Gastrocnemius medialis (tissue), 4 donors: ENCODE measurements at regions of chrX and their contacts with region 1.

Region 1: DNA sequence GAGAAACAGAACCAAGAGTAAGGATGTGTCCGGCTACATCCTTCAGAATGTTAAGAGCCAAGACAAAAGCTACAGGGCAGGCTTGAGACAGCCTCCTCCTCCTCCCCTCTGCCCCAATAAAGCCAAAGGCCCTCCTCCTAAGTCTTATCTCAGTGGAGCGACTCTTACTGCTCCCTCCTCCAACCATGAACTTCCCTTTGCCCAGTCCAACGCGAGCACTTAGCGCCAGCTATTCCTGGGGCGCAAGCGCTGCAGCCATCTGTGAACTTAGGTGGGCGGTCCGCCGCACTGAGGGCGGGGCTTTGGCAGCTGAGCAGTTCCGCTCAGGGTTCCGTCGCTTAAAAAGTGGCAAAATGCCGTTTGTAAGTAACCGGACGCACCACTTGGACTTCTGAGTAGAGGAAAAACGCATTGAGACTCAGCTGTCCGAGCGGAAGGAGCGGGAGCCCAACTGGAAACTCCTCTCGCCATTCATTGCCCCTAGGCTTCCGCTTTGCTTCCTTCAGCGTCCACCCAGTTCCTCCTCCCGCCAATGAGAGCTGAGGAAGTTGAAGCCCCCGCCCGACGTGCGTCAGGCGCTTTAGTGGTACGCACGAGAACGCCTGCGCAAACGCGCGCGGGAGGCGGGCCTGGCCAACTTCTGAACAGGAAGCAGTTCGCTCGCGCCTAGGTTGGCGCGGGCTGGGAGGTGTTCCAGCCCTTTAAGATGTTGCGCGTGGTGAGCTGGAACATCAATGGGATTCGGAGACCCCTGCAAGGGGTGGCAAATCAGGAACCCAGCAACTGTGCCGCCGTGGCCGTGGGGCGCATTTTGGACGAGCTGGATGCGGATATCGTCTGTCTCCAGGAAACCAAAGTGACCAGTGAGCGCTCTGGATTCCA is at the start of gene APEX2:
- DNase-seq: peak; percentile 81 to 91
- ATAC-seq: peak; percentile 73 to 75
- H3K4me3 ChIP-seq: peak within 1 kb of the TSS; percentile 63 to 80 (median 72)
- H3K27ac ChIP-seq: peak within 1 kb of the TSS; percentile 84 to 93 (median 90)
- H3K4me1 ChIP-seq: peaks cover 15 to 20% of the 10 kb centered on the region in 2 donors
- H3K27me3 ChIP-seq: no peaks in the 10 kb centered on the region
- CTCF ChIP-seq: no peak
- POLR2A ChIP-seq: peak; percentile 69 to 90
- total RNA-seq, gene APEX2: 8.3 to 17.2 (median 8.8) TPM

Region 2: GRCh38 chrX:53294024-53294648 is 1705.8 kb before region 1 on chrX:
- in situ Hi-C with region 1: no loop called
- intact Hi-C with region 1: loop called (anchors 5 kb)
- DNase-seq: no peak
- ATAC-seq: no peak
- H3K4me3 ChIP-seq: no peak overlapping the region
- H3K27ac ChIP-seq: no peak overlapping the region
- H3K4me1 ChIP-seq: peaks cover 18 to 23% of the 10 kb centered on the region in 2 donors
- H3K27me3 ChIP-seq: no peaks in the 10 kb centered on the region
- CTCF ChIP-seq: no peak
- POLR2A ChIP-seq: no peak

Region 3: GRCh38 chrX:54529552-54530357 is 470.2 kb before region 1 on chrX and contains the start of gene GNL3L:
- in situ Hi-C with region 1: no loop called
- intact Hi-C with region 1: loop called (anchors 5 kb)
- DNase-seq: peak; percentile 78 to 87
- ATAC-seq: peak; percentile 91 to 92
- H3K4me3 ChIP-seq: peak within 1 kb of the TSS; percentile 64 to 84 (median 76)
- H3K27ac ChIP-seq: peak within 1 kb of the TSS; percentile 80 to 91 (median 84)
- H3K4me1 ChIP-seq: peaks cover 4 to 12% of the 10 kb centered on the region in 2 donors
- H3K27me3 ChIP-seq: no peaks in the 10 kb centered on the region
- CTCF ChIP-seq: no peak
- POLR2A ChIP-seq: peak; percentile 38 to 50
- total RNA-seq, gene GNL3L: 21.2 to 41.7 (median 34.9) TPM

Region 4: DNA sequence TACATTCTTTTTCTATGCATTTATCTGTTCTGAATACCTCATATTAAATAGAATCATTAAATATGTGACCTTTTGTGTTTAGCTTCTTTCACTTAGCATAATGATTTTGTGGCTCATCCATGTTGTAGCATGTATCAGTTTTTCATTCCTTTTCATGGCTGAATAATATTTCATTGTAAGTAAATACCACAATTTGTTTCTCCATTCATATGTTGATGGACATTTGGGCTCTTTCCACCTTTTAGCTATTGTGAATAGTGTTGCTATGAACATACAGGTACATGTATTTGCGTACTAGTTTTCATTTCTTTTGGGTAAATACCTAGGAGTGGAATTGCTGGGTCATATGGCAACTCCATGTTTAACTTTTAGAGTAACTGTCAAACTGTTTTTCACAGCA is 384.8 kb before region 1 on chrX:
- in situ Hi-C with region 1: no loop called
- intact Hi-C with region 1: no loop called
- DNase-seq: no peak
- ATAC-seq: no peak
- H3K4me3 ChIP-seq: no peak overlapping the region
- H3K27ac ChIP-seq: no peak overlapping the region
- H3K4me1 ChIP-seq: no peaks in the 10 kb centered on the region
- H3K27me3 ChIP-seq: no peaks in the 10 kb centered on the region
- CTCF ChIP-seq: no peak
- POLR2A ChIP-seq: no peak

Region 5: GRCh38 chrX:54747733-54748393 is 252.1 kb before region 1 on chrX:
- in situ Hi-C with region 1: no loop called
- intact Hi-C with region 1: loop called (anchors 5 kb)
- DNase-seq: no peak
- ATAC-seq: no peak
- H3K4me3 ChIP-seq: peak overlapping the region; percentile 52 to 58 (median 57)
- H3K27ac ChIP-seq: peak overlapping the region; percentile 75 to 88 (median 86)
- H3K4me1 ChIP-seq: peaks cover 2 to 3% of the 10 kb centered on the region in 2 donors
- H3K27me3 ChIP-seq: no peaks in the 10 kb centered on the region
- CTCF ChIP-seq: no peak
- POLR2A ChIP-seq: no peak

Region 6: DNA sequence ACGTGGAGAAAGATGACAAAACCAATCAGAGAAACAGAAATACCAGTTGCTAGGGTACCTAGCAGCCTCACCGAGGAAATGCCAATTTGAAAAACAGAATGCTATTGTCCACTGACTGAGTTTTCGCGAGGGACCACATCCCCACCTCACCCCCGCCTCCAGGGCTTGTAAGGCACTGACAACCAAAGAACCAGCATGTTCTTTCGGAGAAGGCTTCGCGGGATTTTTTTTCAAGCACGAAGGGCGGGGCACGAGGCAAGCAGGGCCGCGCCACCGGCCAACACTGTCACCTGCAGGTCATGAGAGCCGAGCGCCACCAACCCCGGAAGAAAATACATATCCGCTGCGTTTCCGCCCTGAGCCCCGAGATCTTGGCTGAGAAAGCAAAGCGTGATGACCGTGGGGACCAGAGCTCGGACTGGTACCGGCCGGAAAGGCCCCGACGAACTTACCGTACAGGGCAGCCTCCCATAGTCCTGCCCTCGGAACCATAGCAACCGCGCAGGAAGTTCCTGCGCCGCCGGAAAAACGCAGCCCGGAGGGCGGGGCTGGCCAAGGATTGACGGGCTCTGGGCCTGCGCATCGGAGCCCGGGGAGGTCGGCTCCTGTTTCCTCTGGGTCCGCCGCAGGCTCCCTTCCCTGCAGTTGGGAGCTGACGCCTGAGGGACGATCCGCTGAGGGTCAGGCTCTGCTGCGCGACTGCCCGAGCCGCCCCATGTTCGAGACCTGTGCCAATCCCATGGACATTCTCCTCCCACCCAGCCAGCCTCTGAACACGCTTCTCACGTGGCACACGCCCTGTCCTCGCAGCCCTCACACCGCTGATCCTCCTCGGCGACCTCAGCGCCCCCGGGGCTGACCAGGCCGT is 161.0 kb after region 1 on chrX:
- in situ Hi-C with region 1: no loop called
- intact Hi-C with region 1: loop called (anchors 2 kb)
- DNase-seq: peak; percentile 81 to 87
- ATAC-seq: peak; percentile 96
- H3K4me3 ChIP-seq: peak overlapping the region; percentile 64 to 73 (median 68)
- H3K27ac ChIP-seq: peak overlapping the region; percentile 90 to 91 (median 91)
- H3K4me1 ChIP-seq: peaks cover 0 to 5% of the 10 kb centered on the region in 2 donors
- H3K27me3 ChIP-seq: no peaks in the 10 kb centered on the region
- CTCF ChIP-seq: peak; percentile 12 to 52 (median 41)
- POLR2A ChIP-seq: peak; percentile 76 to 83

Region 7: DNA sequence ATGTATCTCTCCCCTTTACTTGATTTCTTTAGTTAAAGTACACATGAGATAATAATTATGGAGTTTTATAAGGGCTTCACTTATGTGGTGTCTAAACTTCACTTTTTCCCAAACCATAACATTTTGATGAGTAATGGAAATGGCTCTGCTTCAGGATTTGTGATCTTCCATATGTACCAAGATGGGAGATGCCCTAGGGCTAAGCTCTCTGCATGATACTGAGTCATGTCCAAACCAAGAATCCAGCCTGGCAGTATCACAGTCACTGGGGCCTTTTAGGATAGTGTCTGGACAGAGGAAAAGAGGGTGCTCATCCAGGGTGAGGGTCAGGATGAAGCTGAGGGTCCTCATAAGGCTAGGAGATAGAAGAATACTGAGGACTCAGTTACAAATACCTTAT is 312.7 kb after region 1 on chrX:
- in situ Hi-C with region 1: no loop called
- intact Hi-C with region 1: no loop called
- DNase-seq: no peak
- ATAC-seq: no peak
- H3K4me3 ChIP-seq: no peak overlapping the region
- H3K27ac ChIP-seq: no peak overlapping the region
- H3K4me1 ChIP-seq: no peaks in the 10 kb centered on the region
- H3K27me3 ChIP-seq: no peaks in the 10 kb centered on the region
- CTCF ChIP-seq: no peak
- POLR2A ChIP-seq: no peak

Region 8: GRCh38 chrX:55717521-55718497 is 717.9 kb after region 1 on chrX and contains the start of gene RRAGB:
- in situ Hi-C with region 1: no loop called
- intact Hi-C with region 1: loop called (anchors 5 kb)
- DNase-seq: peak; percentile 90 to 96
- ATAC-seq: peak; percentile 96 to 97
- H3K4me3 ChIP-seq: peak within 1 kb of the TSS; percentile 66 to 77 (median 74)
- H3K27ac ChIP-seq: peak within 1 kb of the TSS; percentile 83 to 93 (median 90)
- H3K4me1 ChIP-seq: peaks cover 5 to 12% of the 10 kb centered on the region in 2 donors
- H3K27me3 ChIP-seq: no peaks in the 10 kb centered on the region
- CTCF ChIP-seq: peak; percentile 54 to 67 (median 56)
- POLR2A ChIP-seq: peak; percentile 36 to 49
- total RNA-seq, gene RRAGB: 2.8 to 20.9 (median 7.4) TPM